Thyroid gland (tissue), 4 donors: ENCODE measurements at regions of chr17 and their contacts with region 1.

Region 1: DNA sequence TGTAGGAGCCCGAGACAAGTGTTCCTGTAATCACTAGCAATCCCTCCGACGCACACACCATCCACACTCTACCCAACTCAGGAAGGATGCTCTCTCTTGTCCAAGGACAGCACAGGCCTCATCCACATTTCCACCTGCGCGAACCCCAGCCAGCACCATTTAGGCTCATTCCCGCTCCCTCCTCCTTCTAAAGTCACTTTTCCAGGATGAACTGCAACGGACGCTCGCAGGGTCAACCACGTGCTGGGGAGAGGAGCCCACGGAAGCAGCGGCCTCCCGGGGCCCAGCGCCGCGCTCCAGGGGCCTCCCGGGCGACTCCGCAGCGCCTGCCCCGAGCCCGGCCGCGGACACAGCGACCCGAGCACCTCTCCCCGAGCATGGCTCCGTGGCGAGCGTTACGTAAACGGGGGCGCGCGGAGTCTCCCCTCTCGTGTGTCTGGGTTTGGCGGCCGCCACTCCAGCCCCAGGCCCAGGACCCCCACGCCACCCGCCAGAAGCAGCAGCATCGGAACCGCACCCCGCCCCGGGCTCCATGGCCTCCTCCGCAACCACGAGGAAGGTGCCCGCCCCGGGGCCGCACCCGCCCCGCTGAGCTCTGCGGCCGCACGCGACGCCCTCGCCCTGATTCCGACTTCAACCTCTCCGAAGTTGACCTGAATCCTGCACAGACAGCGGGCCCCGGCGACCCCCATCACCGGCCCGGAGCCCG is 698 bp downstream of the USP36 start:
- DNase-seq: peak; percentile 24 to 33
- H3K4me3 ChIP-seq: peak overlapping the region; percentile 78 to 91 (median 84)
- H3K27ac ChIP-seq: peak overlapping the region; percentile 95 to 100 (median 98)
- H3K4me1 ChIP-seq: peaks cover 19% of the 10 kb centered on the region in 2 donors
- H3K27me3 ChIP-seq: no peaks in the 10 kb centered on the region
- CTCF ChIP-seq: no peak
- POLR2A ChIP-seq: no peak

Region 2: DNA sequence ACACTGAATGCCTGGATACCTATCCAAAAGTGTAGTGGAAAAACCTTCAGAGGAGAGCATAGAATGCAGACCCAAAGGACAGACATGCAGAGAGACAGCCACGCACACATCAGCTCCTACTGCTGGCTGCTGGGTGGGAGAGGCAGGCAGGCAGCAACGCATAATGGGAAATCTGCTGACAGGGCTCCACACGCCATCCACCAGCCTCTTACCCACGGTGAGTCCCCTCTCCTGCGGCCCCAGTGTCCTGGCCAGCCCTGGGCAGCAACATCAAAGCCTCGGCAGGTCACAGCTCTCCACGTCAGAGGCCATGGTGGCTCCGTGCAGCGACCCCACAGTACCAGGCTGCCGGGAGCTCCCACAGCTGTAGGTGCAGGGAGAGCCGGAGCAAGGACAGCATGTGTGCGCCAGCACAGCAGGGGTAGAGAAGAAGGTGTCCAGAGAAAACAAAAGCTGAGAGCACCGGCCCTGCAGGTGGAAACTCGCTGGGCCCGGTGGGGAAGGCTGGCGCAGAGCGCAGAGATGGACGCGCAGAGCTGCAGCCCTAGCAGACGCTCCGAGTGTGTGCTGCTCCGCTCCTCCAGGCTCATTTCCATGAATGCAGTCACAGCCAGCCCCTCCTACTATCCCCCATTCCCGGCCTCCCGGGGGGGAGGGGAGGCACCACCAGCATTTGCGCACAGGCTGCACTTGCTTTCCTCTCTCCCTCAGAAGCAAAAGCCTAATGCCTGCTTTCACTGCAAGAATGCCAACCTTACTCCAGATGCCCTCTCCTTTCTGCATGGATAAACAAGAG is 116.7 kb before region 1 on chr17:
- intact Hi-C with region 1: loop called (anchors 10 kb)
- DNase-seq: peak; percentile 81 to 84
- H3K4me3 ChIP-seq: peak overlapping the region in 1 of 3 donors; percentile 13
- H3K27ac ChIP-seq: peak overlapping the region; percentile 67 to 72 (median 69)
- H3K4me1 ChIP-seq: peaks cover 74 to 85% of the 10 kb centered on the region in 2 donors
- H3K27me3 ChIP-seq: no peaks in the 10 kb centered on the region
- CTCF ChIP-seq: no peak
- POLR2A ChIP-seq: peak in 1 of 2 donors; percentile 45